Activated CD4-positive, alpha-beta T cell treated with anti-CD3 and anti-CD28 coated beads, Interleukin-2, amount 10 ng/mL, durations not matched to agents 24 days and 14 days (primary cell): ENCODE measurements at regions of chrX and their contacts with region 1.

Region 1: DNA sequence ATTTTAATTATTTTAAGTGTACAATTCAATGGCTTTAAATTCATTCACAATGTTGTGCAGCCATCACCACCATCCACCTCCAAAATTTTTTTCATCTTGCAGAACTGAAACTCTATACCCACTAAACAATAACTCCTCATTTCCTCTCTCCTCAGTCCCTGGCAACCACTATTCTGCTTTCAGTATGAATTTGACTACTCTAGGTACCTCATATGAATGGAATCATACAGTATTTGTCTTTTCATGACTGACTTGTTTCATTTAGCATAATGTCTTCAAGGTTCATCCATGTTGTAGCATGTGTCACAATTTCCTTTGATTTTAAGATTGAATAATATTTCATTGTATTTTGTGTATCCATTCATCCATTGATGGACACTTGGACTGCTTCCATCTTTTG is 46.9 kb downstream of the KIF4A start:
- DNase-seq: peak; percentile 58
- H3K4me3 Mint-ChIP-seq: no peak overlapping the region
- H3K27ac Mint-ChIP-seq: peak overlapping the region; percentile 45
- H3K4me1 Mint-ChIP-seq: peaks cover 15% of the 10 kb centered on the region
- H3K27me3 Mint-ChIP-seq: no peaks in the 10 kb centered on the region

Region 2: GRCh38 chrX:70289793-70290776 is 46.7 kb before region 1 on chrX and contains the starts of genes KIF4A and PDZD11:
- intact Hi-C with region 1: loop called (anchors 2 kb)
- DNase-seq: peak; percentile 96
- H3K4me3 Mint-ChIP-seq: peak within 1 kb of the TSS; percentile 94
- H3K27ac Mint-ChIP-seq: peak within 1 kb of the TSS; percentile 87
- H3K4me1 Mint-ChIP-seq: peaks cover 22% of the 10 kb centered on the region
- H3K27me3 Mint-ChIP-seq: no peaks in the 10 kb centered on the region
- total RNA-seq, gene KIF4A: 19.4 and 19.8 TPM in 2 replicates
- total RNA-seq, gene PDZD11: 28.9 and 30.0 TPM in 2 replicates

Region 3: DNA sequence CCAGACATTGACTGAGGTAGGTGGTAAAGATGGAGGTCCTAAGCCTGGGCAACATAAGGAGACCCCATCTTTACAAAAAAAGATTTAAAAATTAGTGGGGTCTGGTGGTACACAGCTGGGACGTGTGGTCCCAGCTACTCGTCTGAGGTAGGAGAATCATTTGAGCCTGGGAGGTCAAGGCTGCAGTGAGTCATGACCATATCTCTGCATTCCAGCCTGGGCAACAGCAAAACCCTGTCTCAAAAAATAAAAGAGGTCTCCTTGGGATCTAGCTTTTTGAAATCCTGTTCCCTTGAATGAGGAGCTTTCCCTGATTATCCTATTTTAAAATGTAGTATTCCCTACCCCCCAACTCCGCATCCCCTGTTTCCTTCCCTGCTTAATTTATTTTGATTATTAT is 1117.5 kb after region 1 on chrX:
- intact Hi-C with region 1: no loop called
- DNase-seq: no peak
- H3K4me3 Mint-ChIP-seq: no peak overlapping the region
- H3K27ac Mint-ChIP-seq: no peak overlapping the region
- H3K4me1 Mint-ChIP-seq: no peaks in the 10 kb centered on the region
- H3K27me3 Mint-ChIP-seq: no peaks in the 10 kb centered on the region